Tibial artery (tissue), 4 donors: ENCODE measurements at regions of chrX and their contacts with region 1.

Region 1: GRCh38 chrX:47193475-47194193 is at the start of gene UBA1:
- DNase-seq: peak; percentile 93 to 94
- H3K4me3 ChIP-seq: peak within 1 kb of the TSS; percentile 79 to 88
- H3K27ac ChIP-seq: peak within 1 kb of the TSS; percentile 96 to 98
- H3K4me1 ChIP-seq: peaks cover 0 to 59% (median 34%) of the 10 kb centered on the region in 4 donors
- H3K27me3 ChIP-seq: no peaks in the 10 kb centered on the region
- CTCF ChIP-seq: peak; percentile 53 to 79

Region 2: DNA sequence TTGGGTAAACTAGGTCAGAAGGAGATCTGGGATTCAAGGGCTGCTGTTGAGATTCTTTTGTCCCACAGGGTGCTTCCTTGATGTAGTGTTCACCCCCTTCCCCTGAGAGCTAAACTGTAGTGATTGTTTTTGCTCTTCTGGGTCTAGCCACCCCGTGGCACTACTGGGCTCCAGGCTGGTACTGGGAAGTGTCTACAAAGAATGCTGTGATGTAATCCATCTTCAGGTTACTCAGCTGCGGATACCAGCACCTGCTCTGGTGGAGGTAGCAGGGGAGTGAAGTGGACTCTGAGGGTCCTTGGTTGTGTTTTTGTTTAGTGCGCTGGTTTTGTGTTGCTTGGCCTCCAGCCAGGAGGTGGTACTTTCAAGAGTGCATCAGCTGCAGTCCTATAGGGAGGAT is 1013.9 kb before region 1 on chrX:
- intact Hi-C with region 1: no loop called
- DNase-seq: no peak
- H3K4me3 ChIP-seq: no peak overlapping the region
- H3K27ac ChIP-seq: no peak overlapping the region
- H3K4me1 ChIP-seq: peaks cover 0 to 15% (median 0%) of the 10 kb centered on the region in 4 donors
- H3K27me3 ChIP-seq: no peaks in the 10 kb centered on the region
- CTCF ChIP-seq: no peak

Region 3: GRCh38 chrX:46984705-46985104 is 208.9 kb before region 1 on chrX:
- intact Hi-C with region 1: no loop called
- DNase-seq: no peak
- H3K4me3 ChIP-seq: no peak overlapping the region
- H3K27ac ChIP-seq: no peak overlapping the region
- H3K4me1 ChIP-seq: no peaks in the 10 kb centered on the region
- H3K27me3 ChIP-seq: no peaks in the 10 kb centered on the region
- CTCF ChIP-seq: no peak

Region 4: GRCh38 chrX:47384502-47384901 is 190.9 kb after region 1 on chrX:
- intact Hi-C with region 1: loop called (anchors 5 kb)
- DNase-seq: peak; percentile 45 to 61
- H3K4me3 ChIP-seq: no peak overlapping the region
- H3K27ac ChIP-seq: no peak overlapping the region
- H3K4me1 ChIP-seq: no peaks in the 10 kb centered on the region
- H3K27me3 ChIP-seq: no peaks in the 10 kb centered on the region
- CTCF ChIP-seq: peak; percentile 52 to 57

Region 5: DNA sequence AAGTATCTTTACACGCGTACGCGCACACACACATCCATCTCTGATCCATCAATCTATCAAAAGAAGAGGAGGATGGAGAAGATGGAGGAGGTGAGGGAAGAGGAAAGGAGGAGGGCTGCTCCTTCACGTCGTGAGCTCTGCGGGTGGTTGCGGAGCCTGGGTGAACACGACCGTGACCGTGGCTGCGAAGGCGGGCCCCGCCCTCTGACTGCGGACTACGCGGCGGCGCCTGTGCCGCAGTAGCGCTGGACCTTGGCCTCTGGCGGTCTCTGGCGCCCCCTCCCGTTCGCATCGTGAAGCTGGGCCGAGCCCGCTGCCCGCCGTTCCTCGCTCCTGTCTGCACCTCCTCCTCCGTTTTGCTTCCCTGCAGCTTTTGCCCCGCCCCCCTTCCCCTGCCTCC is 329.7 kb after region 1 on chrX:
- intact Hi-C with region 1: loop called (anchors 2 kb)
- DNase-seq: peak; percentile 57 to 88
- H3K4me3 ChIP-seq: peak overlapping the region; percentile 51 to 62
- H3K27ac ChIP-seq: peak overlapping the region in 1 of 2 donors; percentile 42
- H3K4me1 ChIP-seq: peaks cover 0 to 4% (median 0%) of the 10 kb centered on the region in 4 donors
- H3K27me3 ChIP-seq: no peaks in the 10 kb centered on the region
- CTCF ChIP-seq: peak; percentile 76 to 81

Region 6: GRCh38 chrX:47644557-47645091 is 451.0 kb after region 1 on chrX:
- intact Hi-C with region 1: loop called (anchors 10 kb)
- DNase-seq: no peak
- H3K4me3 ChIP-seq: no peak overlapping the region
- H3K27ac ChIP-seq: no peak overlapping the region
- H3K4me1 ChIP-seq: peaks cover 0 to 16% (median 10%) of the 10 kb centered on the region in 4 donors
- H3K27me3 ChIP-seq: no peaks in the 10 kb centered on the region
- CTCF ChIP-seq: peak; percentile 24 to 37